ENCODE measurements at regions of chr12 and their contacts with region 1.

Region 1: GRCh38 chr12:68610370-68611093 is at the start of gene RAP1B:
- DNase-seq: no peak
- ATAC-seq: peak; percentile 84
- H3K4me3 ChIP-seq: peak within 1 kb of the TSS; percentile 86
- H3K27ac ChIP-seq: peak within 1 kb of the TSS; percentile 98
- H3K4me1 ChIP-seq: peaks cover 4% of the 10 kb centered on the region; the same call in 1 of the 2 replicates
- H3K27me3 ChIP-seq: no peaks in the 10 kb centered on the region
- CTCF ChIP-seq: no peak
- EP300 ChIP-seq: no peak
- POLR2A ChIP-seq: peak; percentile 96
- RAD21 ChIP-seq: no peak
- polyA plus RNA-seq, gene RAP1B: 88.9 to 95.0 TPM

Region 2: DNA sequence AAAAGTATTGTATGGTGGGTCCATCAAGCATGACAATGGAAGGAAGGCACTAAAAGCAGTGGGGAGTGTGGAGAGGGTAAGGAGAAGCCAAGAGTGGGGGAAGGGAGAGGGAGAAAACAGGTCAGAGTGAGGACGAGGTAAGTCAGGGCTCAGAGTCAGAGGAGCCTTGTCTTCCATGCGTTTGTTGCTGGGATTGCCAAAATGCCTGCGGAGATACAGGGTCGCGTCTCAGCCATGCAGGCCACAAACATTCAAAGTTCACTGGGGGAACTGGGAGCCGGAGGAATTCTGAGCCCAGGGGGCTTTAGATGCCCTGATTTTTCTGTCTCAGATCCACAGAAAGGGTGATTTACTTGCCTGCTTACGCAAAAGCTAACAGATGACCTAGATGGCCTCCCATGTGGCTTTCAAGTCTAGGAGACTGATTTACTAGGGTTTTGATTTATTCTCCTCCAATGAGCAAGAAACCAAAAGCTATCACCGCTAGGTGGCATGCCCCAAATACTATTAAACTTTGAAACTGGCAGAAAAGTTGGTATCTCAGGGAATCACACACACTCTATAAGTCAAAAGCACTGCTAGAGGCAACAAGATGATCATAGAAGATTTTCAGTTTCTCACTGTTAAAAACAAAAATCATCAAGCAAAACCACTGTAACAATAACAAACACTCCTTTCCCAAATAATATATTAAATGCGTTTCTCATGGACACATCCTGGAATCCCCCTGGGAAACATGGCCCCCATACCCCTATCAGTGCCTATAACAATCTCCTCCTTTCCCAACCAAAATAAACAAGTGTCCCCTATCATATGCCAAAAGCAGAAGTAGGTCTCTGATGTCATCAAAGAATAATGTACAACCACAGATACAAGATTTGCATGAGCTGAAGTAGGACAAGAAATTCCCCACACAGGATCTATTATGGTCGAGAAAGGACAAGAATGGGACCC is 251.7 kb before region 1 on chr12:
- CTCF ChIA-PET with region 1: interaction called, 11 read pairs
- POLR2A ChIA-PET with region 1: interaction called, 6 read pairs
- RAD21 ChIA-PET with region 1: interaction called, 8 read pairs
- SMC1A ChIA-PET with region 1: interaction called, 36 read pairs
- in situ Hi-C with region 1: loop called (anchors 25 kb)
- intact Hi-C with region 1: loop called (anchors 2 kb)
- DNase-seq: peak; percentile 74
- ATAC-seq: peak; percentile 90
- H3K4me3 ChIP-seq: no peak overlapping the region
- H3K27ac ChIP-seq: peak overlapping the region; percentile 72
- H3K4me1 ChIP-seq: peaks cover 14% of the 10 kb centered on the region
- H3K27me3 ChIP-seq: no peaks in the 10 kb centered on the region
- CTCF ChIP-seq: peak; percentile 56 to 69 (median 66)
- EP300 ChIP-seq: peak; percentile 83; a peak in 3 of 4 replicates
- POLR2A ChIP-seq: no peak
- RAD21 ChIP-seq: peak; percentile 83

Region 3: GRCh38 chr12:68440068-68440581 is 170.4 kb before region 1 on chr12:
- CTCF ChIA-PET with region 1: no interaction called
- POLR2A ChIA-PET with region 1: interaction called, 13 read pairs
- RAD21 ChIA-PET with region 1: interaction called, 27 read pairs
- SMC1A ChIA-PET with region 1: interaction called, 13 read pairs
- in situ Hi-C with region 1: no loop called
- intact Hi-C with region 1: loop called (anchors 5 kb)
- DNase-seq: no peak
- ATAC-seq: peak; percentile 38
- H3K4me3 ChIP-seq: no peak overlapping the region
- H3K27ac ChIP-seq: no peak overlapping the region
- H3K4me1 ChIP-seq: peaks cover 7% of the 10 kb centered on the region
- H3K27me3 ChIP-seq: no peaks in the 10 kb centered on the region
- CTCF ChIP-seq: no peak
- EP300 ChIP-seq: no peak
- POLR2A ChIP-seq: no peak
- RAD21 ChIP-seq: no peak

Region 4: DNA sequence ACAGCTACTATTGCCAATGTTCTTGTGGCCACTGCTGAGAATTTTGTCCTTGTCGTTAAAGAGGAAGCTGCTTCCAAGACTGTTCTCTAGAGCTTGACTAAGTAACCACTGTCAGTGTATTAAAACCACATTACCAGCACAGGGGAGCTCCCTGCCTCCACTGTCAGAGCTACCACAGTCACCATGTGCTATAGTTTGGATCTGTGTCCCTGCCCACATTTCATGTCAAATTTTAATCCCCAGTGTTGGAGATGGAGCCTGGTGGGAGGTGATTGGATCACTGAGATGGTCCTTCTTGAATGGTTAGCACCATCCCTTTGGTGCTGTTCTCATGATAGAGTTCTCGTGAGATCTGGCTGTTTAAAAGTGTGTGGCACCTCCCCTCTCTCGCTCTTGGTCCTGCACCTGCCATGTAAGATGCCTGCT is 23.1 kb before region 1 on chr12:
- CTCF ChIA-PET with region 1: interaction called, 3 read pairs
- POLR2A ChIA-PET with region 1: no interaction called
- RAD21 ChIA-PET with region 1: interaction called, 11 read pairs
- SMC1A ChIA-PET with region 1: interaction called, 6 read pairs
- in situ Hi-C with region 1: no loop called
- intact Hi-C with region 1: no loop called
- DNase-seq: peak; percentile 65
- ATAC-seq: peak; percentile 94
- H3K4me3 ChIP-seq: no peak overlapping the region
- H3K27ac ChIP-seq: no peak overlapping the region
- H3K4me1 ChIP-seq: peaks cover 8% of the 10 kb centered on the region; the same call in 1 of the 2 replicates
- H3K27me3 ChIP-seq: no peaks in the 10 kb centered on the region
- CTCF ChIP-seq: no peak
- EP300 ChIP-seq: peak in 1 of 2 experiments; percentile 53; a peak in 1 of 4 replicates
- POLR2A ChIP-seq: no peak
- RAD21 ChIP-seq: no peak

Region 5: DNA sequence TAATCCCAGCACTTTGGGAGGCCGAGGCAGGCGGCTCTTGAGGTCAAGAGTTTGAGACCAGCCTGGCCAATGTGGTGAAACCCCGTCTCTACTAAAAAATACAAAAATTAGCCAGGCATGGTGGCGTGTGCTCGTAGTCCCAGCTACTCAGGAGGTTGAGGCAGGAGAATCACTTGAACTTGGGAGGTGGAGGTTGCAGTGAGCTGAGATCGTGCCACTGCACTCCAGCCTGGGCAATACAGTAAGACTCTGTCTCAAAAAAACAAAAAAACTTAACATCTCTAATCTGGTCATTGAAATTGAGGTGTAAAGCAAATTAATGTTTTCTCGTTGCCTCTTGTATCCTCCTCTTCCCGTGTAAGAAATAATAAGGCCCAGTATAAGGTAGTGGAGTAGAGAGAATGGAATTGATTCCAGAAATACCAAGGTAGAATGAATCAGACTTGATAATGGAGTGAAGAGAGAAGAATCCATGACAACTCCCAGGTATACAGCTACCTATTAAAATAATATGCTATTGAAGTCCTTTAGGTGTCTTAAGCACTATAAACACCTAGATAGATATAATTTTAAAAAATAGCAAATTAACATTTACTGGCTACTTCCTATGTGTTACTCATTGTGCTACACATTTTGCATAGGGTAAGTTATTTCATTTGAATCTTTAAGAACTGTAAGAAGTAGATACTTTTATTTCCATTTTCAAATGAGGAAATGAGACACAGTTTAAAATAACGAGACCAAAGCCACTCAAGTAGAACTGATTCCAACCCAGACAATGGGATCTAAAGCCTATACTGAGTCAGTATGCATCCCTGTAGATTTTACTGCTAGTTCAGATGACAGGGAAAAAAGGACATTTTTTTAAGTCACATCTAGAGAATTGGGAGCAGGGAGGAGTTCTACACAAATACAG is 23.3 kb after region 1 on chr12:
- CTCF ChIA-PET with region 1: interaction called, 7 read pairs
- POLR2A ChIA-PET with region 1: interaction called, 7 read pairs
- RAD21 ChIA-PET with region 1: interaction called, 24 read pairs
- SMC1A ChIA-PET with region 1: interaction called, 26 read pairs
- in situ Hi-C with region 1: no loop called
- intact Hi-C with region 1: loop called (anchors 2 kb)
- DNase-seq: no peak
- ATAC-seq: peak; percentile 40
- H3K4me3 ChIP-seq: peak overlapping the region; percentile 15; the same call in 1 of the 2 replicates
- H3K27ac ChIP-seq: peak overlapping the region; percentile 41
- H3K4me1 ChIP-seq: peaks cover 55% of the 10 kb centered on the region
- H3K27me3 ChIP-seq: no peaks in the 10 kb centered on the region
- CTCF ChIP-seq: no peak
- EP300 ChIP-seq: peak in 1 of 2 experiments; percentile 38; a peak in 1 of 4 replicates
- POLR2A ChIP-seq: no peak
- RAD21 ChIP-seq: no peak

Region 6: GRCh38 chr12:68768431-68768939 is 158.0 kb after region 1 on chr12:
- CTCF ChIA-PET with region 1: no interaction called
- POLR2A ChIA-PET with region 1: no interaction called
- RAD21 ChIA-PET with region 1: no interaction called
- SMC1A ChIA-PET with region 1: no interaction called
- in situ Hi-C with region 1: no loop called
- intact Hi-C with region 1: no loop called
- DNase-seq: no peak
- ATAC-seq: no peak
- H3K4me3 ChIP-seq: no peak overlapping the region
- H3K27ac ChIP-seq: no peak overlapping the region
- H3K4me1 ChIP-seq: peaks cover 6% of the 10 kb centered on the region; the same call in 1 of the 2 replicates
- H3K27me3 ChIP-seq: no peaks in the 10 kb centered on the region
- CTCF ChIP-seq: no peak
- EP300 ChIP-seq: no peak
- POLR2A ChIP-seq: no peak
- RAD21 ChIP-seq: no peak

Region 7: DNA sequence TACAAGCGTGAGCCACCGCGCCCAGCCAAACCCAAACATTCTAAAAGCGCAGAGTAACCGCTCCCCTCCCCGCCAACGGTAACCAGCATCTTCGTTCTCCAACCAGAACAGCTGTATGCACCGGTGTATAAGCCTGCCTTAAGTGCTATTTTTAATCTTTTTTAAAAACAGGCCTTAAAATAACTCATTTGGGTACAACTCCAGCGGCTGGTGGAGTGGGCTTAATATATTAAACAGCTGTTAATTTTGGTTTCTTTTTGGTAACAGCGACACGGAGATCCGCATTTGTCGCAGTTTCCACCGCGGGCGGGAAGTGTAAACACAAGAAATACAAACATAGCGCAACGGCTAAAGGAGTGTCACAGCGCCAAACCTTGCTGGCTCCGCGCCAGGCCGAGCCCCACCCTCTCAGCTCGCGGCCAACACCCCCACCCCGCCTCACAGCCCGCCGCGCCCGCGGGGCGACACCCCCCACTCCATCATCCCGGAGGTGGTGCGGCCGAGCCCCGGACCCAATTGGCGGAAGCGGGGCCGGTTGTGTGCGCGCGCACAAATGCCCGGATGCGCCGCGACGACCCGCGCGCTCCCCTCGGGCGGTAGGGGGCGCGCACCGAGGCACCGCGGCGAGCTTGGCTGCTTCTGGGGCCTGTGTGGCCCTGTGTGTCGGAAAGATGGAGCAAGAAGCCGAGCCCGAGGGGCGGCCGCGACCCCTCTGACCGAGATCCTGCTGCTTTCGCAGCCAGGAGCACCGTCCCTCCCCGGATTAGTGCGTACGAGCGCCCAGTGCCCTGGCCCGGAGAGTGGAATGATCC is 197.2 kb after region 1 on chr12 and contains the start of gene MDM2:
- CTCF ChIA-PET with region 1: no interaction called
- POLR2A ChIA-PET with region 1: interaction called, 4 read pairs
- RAD21 ChIA-PET with region 1: interaction called, 6 read pairs
- SMC1A ChIA-PET with region 1: interaction called, 12 read pairs
- in situ Hi-C with region 1: no loop called
- intact Hi-C with region 1: loop called (anchors 5 kb)
- DNase-seq: peak; percentile 94
- ATAC-seq: peak; percentile 84
- H3K4me3 ChIP-seq: peak within 1 kb of the TSS; percentile 83
- H3K27ac ChIP-seq: peak within 1 kb of the TSS; percentile 100
- H3K4me1 ChIP-seq: no peaks in the 10 kb centered on the region; the same call in 1 of the 2 replicates
- H3K27me3 ChIP-seq: no peaks in the 10 kb centered on the region
- CTCF ChIP-seq: peak; percentile 63 to 76 (median 72)
- EP300 ChIP-seq: peak; percentile 27 to 65; a peak in 2 of 4 replicates
- POLR2A ChIP-seq: peak; percentile 88
- RAD21 ChIP-seq: peak; percentile 30
- polyA plus RNA-seq, gene MDM2: 48.2 to 65.8 TPM